Activated CD4-positive, alpha-beta T cell treated with anti-CD3 and anti-CD28 coated beads, Interleukin-2, amount 10 ng/mL, durations not matched to agents 7 days and 5 days (primary cell): ENCODE measurements at regions of chr3 and their contacts with region 1.

Region 1: DNA sequence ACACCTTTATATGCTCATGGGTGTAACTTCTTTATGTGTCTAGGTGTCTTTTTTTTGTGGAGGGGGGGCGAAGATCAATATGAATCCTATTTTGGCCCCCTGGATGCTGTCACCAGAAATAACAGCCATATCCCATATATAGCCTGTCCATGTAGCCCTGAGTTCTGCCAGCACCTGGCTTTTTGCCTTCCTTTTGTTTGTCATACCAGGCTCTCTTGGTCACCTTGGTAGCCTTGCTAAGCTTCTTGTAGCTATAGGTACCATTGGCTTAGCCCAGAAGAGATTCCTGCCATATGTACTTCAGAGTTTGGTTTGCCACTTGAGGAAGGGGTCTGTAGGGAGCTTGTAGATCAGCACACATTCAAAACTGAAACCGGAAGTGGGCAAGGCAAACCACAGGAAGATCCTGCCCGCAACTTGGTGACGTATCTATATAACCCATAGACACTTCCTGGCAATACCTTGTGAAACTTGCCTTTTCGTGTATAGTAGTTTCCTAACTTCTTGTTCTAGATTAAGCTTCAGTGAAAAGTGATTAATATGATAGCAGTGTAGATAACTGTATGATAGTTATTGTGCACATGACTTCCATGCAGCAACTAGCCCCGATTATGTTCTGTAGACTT is 11.9 kb downstream of the RASA2 start:
- DNase-seq: peak; percentile 95
- H3K4me3 Mint-ChIP-seq: peak overlapping the region; percentile 55
- H3K27ac Mint-ChIP-seq: peak overlapping the region; percentile 91
- H3K4me1 Mint-ChIP-seq: peaks cover 72% of the 10 kb centered on the region
- H3K27me3 Mint-ChIP-seq: no peaks in the 10 kb centered on the region

Region 2: GRCh38 chr3:141487521-141488252 is 11.0 kb before region 1 on chr3:
- CTCF ChIA-PET with region 1: interaction called, 6 read pairs
- POLR2A ChIA-PET with region 1: interaction called, 12 read pairs
- DNase-seq: peak; percentile 94
- H3K4me3 Mint-ChIP-seq: peak overlapping the region; percentile 85
- H3K27ac Mint-ChIP-seq: peak overlapping the region; percentile 94
- H3K4me1 Mint-ChIP-seq: peaks cover 71% of the 10 kb centered on the region
- H3K27me3 Mint-ChIP-seq: no peaks in the 10 kb centered on the region

Region 3: GRCh38 chr3:141544697-141545096 is 46.0 kb after region 1 on chr3:
- CTCF ChIA-PET with region 1: no interaction called
- POLR2A ChIA-PET with region 1: no interaction called
- DNase-seq: peak; percentile 35
- H3K4me3 Mint-ChIP-seq: peak overlapping the region; percentile 8
- H3K27ac Mint-ChIP-seq: peak overlapping the region; percentile 43
- H3K4me1 Mint-ChIP-seq: peaks cover 55% of the 10 kb centered on the region
- H3K27me3 Mint-ChIP-seq: no peaks in the 10 kb centered on the region